ENCODE measurements at regions of chr1 and their contacts with region 1.

Region 1: GRCh38 chr1:200628223-200628881 is 7.8 kb upstream of the KIF14 start:
- DNase-seq: peak; percentile 85
- H3K4me3 Mint-ChIP-seq: peak overlapping the region; percentile 11
- H3K27ac Mint-ChIP-seq: peak overlapping the region; percentile 28
- H3K4me1 Mint-ChIP-seq: peaks cover 36% of the 10 kb centered on the region
- H3K27me3 Mint-ChIP-seq: no peaks in the 10 kb centered on the region

Region 2: GRCh38 chr1:200409761-200410565 is 218.4 kb before region 1 on chr1 and contains the start of gene ZNF281:
- CTCF ChIA-PET with region 1: no interaction called
- POLR2A ChIA-PET with region 1: no interaction called
- intact Hi-C with region 1: no loop called
- DNase-seq: peak; percentile 97
- H3K4me3 Mint-ChIP-seq: peak within 1 kb of the TSS; percentile 87
- H3K27ac Mint-ChIP-seq: peak within 1 kb of the TSS; percentile 88
- H3K4me1 Mint-ChIP-seq: peaks cover 49% of the 10 kb centered on the region
- H3K27me3 Mint-ChIP-seq: no peaks in the 10 kb centered on the region
- total RNA-seq, gene ZNF281: 11.0 to 11.2 TPM

Region 3: GRCh38 chr1:200473698-200474371 is 154.5 kb before region 1 on chr1:
- CTCF ChIA-PET with region 1: no interaction called
- POLR2A ChIA-PET with region 1: no interaction called
- intact Hi-C with region 1: loop called (anchors 5 kb)
- DNase-seq: peak; percentile 69
- H3K4me3 Mint-ChIP-seq: peak overlapping the region; percentile 41
- H3K27ac Mint-ChIP-seq: peak overlapping the region; percentile 65
- H3K4me1 Mint-ChIP-seq: peaks cover 42% of the 10 kb centered on the region
- H3K27me3 Mint-ChIP-seq: peaks cover 13% of the 10 kb centered on the region

Region 4: GRCh38 chr1:200510228-200510623 is 118.1 kb before region 1 on chr1:
- CTCF ChIA-PET with region 1: no interaction called
- POLR2A ChIA-PET with region 1: no interaction called
- intact Hi-C with region 1: no loop called
- DNase-seq: peak; percentile 75
- H3K4me3 Mint-ChIP-seq: no peak overlapping the region
- H3K27ac Mint-ChIP-seq: no peak overlapping the region
- H3K4me1 Mint-ChIP-seq: peaks cover 2% of the 10 kb centered on the region
- H3K27me3 Mint-ChIP-seq: peaks cover 5% of the 10 kb centered on the region

Region 5: GRCh38 chr1:200669314-200670241 is 41.2 kb after region 1 on chr1 and contains the start of gene DDX59:
- CTCF ChIA-PET with region 1: interaction called, 63 read pairs
- POLR2A ChIA-PET with region 1: interaction called, 27 read pairs
- intact Hi-C with region 1: loop called (anchors 1 kb)
- DNase-seq: peak; percentile 95
- H3K4me3 Mint-ChIP-seq: peak within 1 kb of the TSS; percentile 92
- H3K27ac Mint-ChIP-seq: peak within 1 kb of the TSS; percentile 95
- H3K4me1 Mint-ChIP-seq: peaks cover 36% of the 10 kb centered on the region
- H3K27me3 Mint-ChIP-seq: no peaks in the 10 kb centered on the region
- total RNA-seq, gene DDX59: 19.4 to 23.4 TPM

Region 6: GRCh38 chr1:200802865-200803512 is 174.6 kb after region 1 on chr1:
- CTCF ChIA-PET with region 1: interaction called, 113 read pairs
- POLR2A ChIA-PET with region 1: no interaction called
- intact Hi-C with region 1: no loop called
- DNase-seq: peak; percentile 83
- H3K4me3 Mint-ChIP-seq: no peak overlapping the region
- H3K27ac Mint-ChIP-seq: no peak overlapping the region
- H3K4me1 Mint-ChIP-seq: no peaks in the 10 kb centered on the region
- H3K27me3 Mint-ChIP-seq: no peaks in the 10 kb centered on the region

Region 7: DNA sequence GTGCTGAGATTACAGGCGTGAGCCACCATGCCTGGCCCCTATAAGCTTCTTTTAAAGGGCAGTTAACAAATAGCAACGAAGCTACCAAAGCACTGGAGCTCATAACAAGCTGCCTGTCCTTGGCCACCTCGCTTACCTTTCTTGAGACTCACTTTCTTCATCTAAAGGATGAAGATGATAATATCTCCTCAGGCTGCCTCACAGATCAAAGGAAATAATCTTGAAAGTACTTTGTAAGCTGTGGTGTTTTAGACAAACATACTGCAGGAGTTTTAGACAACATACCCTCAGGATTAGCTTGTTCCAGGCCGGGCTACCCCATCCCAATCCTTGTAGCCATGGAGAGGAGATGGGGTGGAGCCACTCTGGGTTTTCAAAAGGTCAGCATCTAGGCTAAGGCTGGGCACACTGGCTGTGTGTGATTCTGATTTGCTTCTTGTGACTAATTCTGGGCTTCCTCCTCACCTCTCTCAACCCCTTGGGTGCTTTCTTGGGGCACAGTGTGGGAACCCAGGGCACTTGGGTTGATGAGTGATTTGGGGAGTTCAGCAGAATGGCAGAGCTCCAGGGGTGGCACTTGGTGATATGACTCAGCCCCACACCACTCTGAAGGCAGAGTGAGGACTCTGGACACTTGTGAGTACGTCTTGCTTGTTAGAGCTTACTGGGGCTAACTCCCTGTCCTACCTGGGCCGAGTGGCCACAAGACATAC is 249.6 kb after region 1 on chr1:
- CTCF ChIA-PET with region 1: no interaction called
- POLR2A ChIA-PET with region 1: no interaction called
- intact Hi-C with region 1: loop called (anchors 1 kb)
- DNase-seq: peak; percentile 89
- H3K4me3 Mint-ChIP-seq: no peak overlapping the region
- H3K27ac Mint-ChIP-seq: no peak overlapping the region
- H3K4me1 Mint-ChIP-seq: peaks cover 56% of the 10 kb centered on the region
- H3K27me3 Mint-ChIP-seq: peaks cover 33% of the 10 kb centered on the region

Measured in activated CD4-positive, alpha-beta memory T cell treated with anti-CD3 and anti-CD28 coated beads for 36 hours (primary cell).